ENCODE measurements at regions of chr1 and their contacts with region 1.

Region 1: GRCh38 chr1:23825076-23825761 is at the start of gene HMGCL:
- DNase-seq: peak; percentile 92
- ATAC-seq: peak; percentile 98
- H3K4me3 ChIP-seq: peak within 1 kb of the TSS; percentile 76 to 95 (median 93)
- H3K4me3 Mint-ChIP-seq: peak within 1 kb of the TSS; percentile 96
- H3K27ac ChIP-seq: peak within 1 kb of the TSS; percentile 81 to 97
- H3K27ac Mint-ChIP-seq: peak within 1 kb of the TSS; percentile 98
- H3K4me1 ChIP-seq: peaks cover 10 to 14% of the 10 kb centered on the region in 2 donors
- H3K4me1 Mint-ChIP-seq: peaks cover 22% of the 10 kb centered on the region
- H3K27me3 ChIP-seq: no peaks in the 10 kb centered on the region
- H3K27me3 Mint-ChIP-seq: no peaks in the 10 kb centered on the region
- CTCF ChIP-seq: no peak
- total RNA-seq, gene HMGCL: 35.9 and 41.2 TPM in 2 replicates

Region 2: DNA sequence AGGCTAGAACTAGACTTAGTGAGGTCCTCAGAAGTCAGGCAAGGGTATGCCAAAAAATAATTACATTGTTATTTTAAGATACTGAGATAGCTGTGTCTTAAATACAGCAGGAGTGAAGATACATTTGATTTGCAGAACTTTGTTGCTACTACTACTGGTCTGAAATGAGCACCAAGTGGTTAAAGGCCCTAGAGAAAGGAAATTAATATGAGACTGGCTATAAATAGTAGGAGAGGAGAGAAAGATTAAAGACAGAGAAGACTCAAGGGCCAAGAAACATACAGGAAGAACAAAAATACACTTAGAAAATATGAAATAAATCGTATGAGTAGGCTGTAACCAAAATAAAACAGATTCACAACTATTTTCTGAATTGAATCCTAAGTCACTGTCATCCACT is 502.4 kb before region 1 on chr1:
- CTCF ChIA-PET with region 1: no interaction called
- POLR2A ChIA-PET with region 1: no interaction called
- intact Hi-C with region 1: no loop called
- DNase-seq: no peak
- ATAC-seq: no peak
- H3K4me3 ChIP-seq: no peak overlapping the region
- H3K4me3 Mint-ChIP-seq: no peak overlapping the region
- H3K27ac ChIP-seq: peak overlapping the region in 1 of 2 donors; percentile 15
- H3K27ac Mint-ChIP-seq: no peak overlapping the region
- H3K4me1 ChIP-seq: no peaks in the 10 kb centered on the region
- H3K4me1 Mint-ChIP-seq: peaks cover 8% of the 10 kb centered on the region
- H3K27me3 ChIP-seq: no peaks in the 10 kb centered on the region
- H3K27me3 Mint-ChIP-seq: no peaks in the 10 kb centered on the region
- CTCF ChIP-seq: no peak

Region 3: DNA sequence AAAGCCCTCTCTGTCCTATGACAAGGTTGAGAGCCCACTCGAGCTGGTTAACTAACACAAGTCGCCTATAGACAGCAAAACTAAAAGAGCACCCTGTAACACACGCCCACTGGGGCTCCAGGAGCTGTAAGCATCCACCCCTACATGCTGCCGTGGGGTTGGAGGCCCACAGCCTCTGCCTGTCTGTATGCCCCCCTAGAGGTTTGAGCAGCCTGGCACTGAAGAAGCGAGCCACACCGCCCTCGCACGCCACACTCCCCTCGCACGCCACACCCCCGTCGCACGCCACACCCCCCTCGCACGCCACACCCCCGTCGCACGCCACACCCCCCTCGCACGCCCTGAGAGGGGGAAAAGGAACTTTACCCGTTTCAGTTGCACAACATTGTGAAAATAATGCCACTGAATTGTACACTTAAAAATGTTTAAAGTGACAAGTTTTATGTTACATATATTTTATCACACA is 13.2 kb after region 1 on chr1:
- CTCF ChIA-PET with region 1: interaction called, 4 read pairs
- POLR2A ChIA-PET with region 1: interaction called, 13 read pairs
- intact Hi-C with region 1: loop called (anchors 1 kb)
- DNase-seq: peak; percentile 89
- ATAC-seq: peak; percentile 100
- H3K4me3 ChIP-seq: peak overlapping the region in 4 of 5 experiments; percentile 19 to 60 (median 40)
- H3K4me3 Mint-ChIP-seq: peak overlapping the region; percentile 88
- H3K27ac ChIP-seq: no peak overlapping the region
- H3K27ac Mint-ChIP-seq: peak overlapping the region; percentile 83
- H3K4me1 ChIP-seq: peaks cover 6 to 7% of the 10 kb centered on the region in 2 donors
- H3K4me1 Mint-ChIP-seq: peaks cover 11% of the 10 kb centered on the region
- H3K27me3 ChIP-seq: no peaks in the 10 kb centered on the region
- H3K27me3 Mint-ChIP-seq: no peaks in the 10 kb centered on the region
- CTCF ChIP-seq: peak; percentile 3

Region 4: GRCh38 chr1:23889074-23889473 is 63.9 kb after region 1 on chr1:
- CTCF ChIA-PET with region 1: no interaction called
- POLR2A ChIA-PET with region 1: interaction called, 19 read pairs
- intact Hi-C with region 1: no loop called
- DNase-seq: peak; percentile 78
- ATAC-seq: peak; percentile 62
- H3K4me3 ChIP-seq: peak overlapping the region in 1 of 5 experiments; percentile 60
- H3K4me3 Mint-ChIP-seq: peak overlapping the region; percentile 81
- H3K27ac ChIP-seq: peak overlapping the region; percentile 70 to 82
- H3K27ac Mint-ChIP-seq: peak overlapping the region; percentile 88
- H3K4me1 ChIP-seq: peaks cover 68 to 74% of the 10 kb centered on the region in 2 donors
- H3K4me1 Mint-ChIP-seq: peaks cover 72% of the 10 kb centered on the region
- H3K27me3 ChIP-seq: no peaks in the 10 kb centered on the region
- H3K27me3 Mint-ChIP-seq: no peaks in the 10 kb centered on the region
- CTCF ChIP-seq: no peak

Region 5: GRCh38 chr1:23979878-23980724 is 154.9 kb after region 1 on chr1 and contains the start of gene SRSF10:
- CTCF ChIA-PET with region 1: no interaction called
- POLR2A ChIA-PET with region 1: no interaction called
- intact Hi-C with region 1: loop called (anchors 1 kb)
- DNase-seq: peak; percentile 100
- ATAC-seq: peak; percentile 96
- H3K4me3 ChIP-seq: peak within 1 kb of the TSS; percentile 84 to 96 (median 89)
- H3K4me3 Mint-ChIP-seq: peak within 1 kb of the TSS; percentile 91
- H3K27ac ChIP-seq: peak within 1 kb of the TSS; percentile 97
- H3K27ac Mint-ChIP-seq: peak within 1 kb of the TSS; percentile 95
- H3K4me1 ChIP-seq: peaks cover 32 to 41% of the 10 kb centered on the region in 2 donors
- H3K4me1 Mint-ChIP-seq: peaks cover 49% of the 10 kb centered on the region
- H3K27me3 ChIP-seq: no peaks in the 10 kb centered on the region
- H3K27me3 Mint-ChIP-seq: no peaks in the 10 kb centered on the region
- CTCF ChIP-seq: peak; percentile 42
- total RNA-seq, gene SRSF10: 213 and 223 TPM in 2 replicates

Measured in B cell (primary cell).